ENCODE measurements at regions of chr9 and their contacts with region 1.

Region 1: DNA sequence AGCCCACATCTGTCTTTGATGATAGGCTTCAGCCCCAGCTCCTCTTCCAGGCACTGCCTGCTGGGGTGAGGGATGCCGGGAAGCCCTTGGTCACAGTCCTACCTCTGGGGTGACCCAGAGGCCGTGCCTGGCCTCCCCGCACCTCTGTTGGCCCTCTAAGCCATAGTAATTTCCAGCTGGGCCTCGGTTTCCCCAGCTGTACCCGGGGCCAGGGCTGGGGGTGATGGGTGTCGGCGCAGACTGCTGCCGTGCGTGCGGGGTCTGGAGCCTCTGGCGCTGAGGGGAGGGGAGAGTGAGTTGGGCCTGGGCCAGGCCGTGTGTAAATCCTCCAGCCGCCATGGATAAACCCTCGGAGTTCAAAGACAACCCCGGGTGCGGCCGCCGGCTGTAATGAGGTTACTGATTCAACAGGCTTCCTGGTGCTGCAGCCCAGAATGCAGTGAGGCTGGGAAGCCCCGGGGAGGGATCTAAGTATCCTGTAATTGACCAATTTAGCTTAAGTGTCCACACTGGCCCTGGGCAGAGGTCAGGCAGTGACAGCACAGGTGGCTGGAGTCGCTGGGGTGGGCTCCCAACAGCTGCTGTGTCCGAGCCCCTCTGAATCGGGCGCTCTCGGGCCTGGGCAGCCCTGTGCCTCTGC is 7.1 kb downstream of the RXRA start:
- DNase-seq: no peak
- H3K4me3 ChIP-seq: no peak overlapping the region
- H3K27ac ChIP-seq: no peak overlapping the region
- H3K4me1 ChIP-seq: peaks cover 2 to 46% of the 10 kb centered on the region in 2 donors
- H3K27me3 ChIP-seq: no peaks in the 10 kb centered on the region
- CTCF ChIP-seq: no peak
- POLR2A ChIP-seq: no peak

Region 2: DNA sequence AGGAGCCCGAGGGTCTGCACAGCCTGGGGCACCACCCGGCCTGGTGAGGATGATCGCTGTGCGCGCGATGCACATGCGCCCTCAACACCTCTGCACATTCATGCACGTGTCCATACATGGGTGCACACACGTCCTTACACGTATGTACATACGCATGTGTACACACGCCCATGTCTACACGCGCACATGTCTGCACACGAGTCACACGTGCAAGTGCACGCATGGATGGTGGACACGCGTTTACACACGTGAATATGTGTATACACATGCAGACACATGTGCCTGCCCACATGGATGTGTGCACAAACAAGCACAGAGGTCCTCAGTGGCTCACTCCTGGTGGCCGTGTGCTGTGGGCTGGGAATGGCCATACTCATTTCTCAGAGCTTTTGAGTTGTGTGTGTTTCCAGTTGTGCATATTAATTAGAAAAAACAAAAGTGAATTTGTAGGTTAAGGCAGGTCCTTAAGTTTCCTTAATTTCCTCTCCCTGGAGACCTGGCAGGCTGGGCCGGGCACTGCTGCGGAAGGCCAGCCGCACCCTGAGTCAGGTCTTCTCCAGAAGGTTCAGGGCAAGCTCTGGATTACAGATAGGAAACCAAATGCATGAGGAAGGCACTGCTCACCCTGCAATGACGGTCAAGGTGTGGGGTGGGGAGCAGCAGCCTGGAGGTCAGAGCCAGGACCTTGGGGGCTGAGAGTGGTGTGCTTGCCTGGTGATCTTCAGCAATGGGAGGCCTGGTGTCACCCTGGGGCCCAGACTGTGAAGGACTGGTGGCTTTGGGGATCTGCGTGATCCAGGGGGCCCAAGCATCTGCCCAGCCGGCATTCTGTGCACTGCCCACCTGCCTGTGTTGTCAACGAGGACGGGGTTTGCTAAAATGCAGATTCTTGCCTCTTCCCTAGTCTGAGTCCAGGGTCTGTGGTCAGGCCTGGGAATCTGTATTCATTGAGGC is 167.7 kb before region 1 on chr9:
- intact Hi-C with region 1: loop called (anchors 5 kb)
- DNase-seq: peak in 1 of 2 donors; percentile 46
- H3K4me3 ChIP-seq: no peak overlapping the region
- H3K27ac ChIP-seq: no peak overlapping the region
- H3K4me1 ChIP-seq: no peaks in the 10 kb centered on the region
- H3K27me3 ChIP-seq: no peaks in the 10 kb centered on the region
- CTCF ChIP-seq: no peak
- POLR2A ChIP-seq: no peak

Region 3: DNA sequence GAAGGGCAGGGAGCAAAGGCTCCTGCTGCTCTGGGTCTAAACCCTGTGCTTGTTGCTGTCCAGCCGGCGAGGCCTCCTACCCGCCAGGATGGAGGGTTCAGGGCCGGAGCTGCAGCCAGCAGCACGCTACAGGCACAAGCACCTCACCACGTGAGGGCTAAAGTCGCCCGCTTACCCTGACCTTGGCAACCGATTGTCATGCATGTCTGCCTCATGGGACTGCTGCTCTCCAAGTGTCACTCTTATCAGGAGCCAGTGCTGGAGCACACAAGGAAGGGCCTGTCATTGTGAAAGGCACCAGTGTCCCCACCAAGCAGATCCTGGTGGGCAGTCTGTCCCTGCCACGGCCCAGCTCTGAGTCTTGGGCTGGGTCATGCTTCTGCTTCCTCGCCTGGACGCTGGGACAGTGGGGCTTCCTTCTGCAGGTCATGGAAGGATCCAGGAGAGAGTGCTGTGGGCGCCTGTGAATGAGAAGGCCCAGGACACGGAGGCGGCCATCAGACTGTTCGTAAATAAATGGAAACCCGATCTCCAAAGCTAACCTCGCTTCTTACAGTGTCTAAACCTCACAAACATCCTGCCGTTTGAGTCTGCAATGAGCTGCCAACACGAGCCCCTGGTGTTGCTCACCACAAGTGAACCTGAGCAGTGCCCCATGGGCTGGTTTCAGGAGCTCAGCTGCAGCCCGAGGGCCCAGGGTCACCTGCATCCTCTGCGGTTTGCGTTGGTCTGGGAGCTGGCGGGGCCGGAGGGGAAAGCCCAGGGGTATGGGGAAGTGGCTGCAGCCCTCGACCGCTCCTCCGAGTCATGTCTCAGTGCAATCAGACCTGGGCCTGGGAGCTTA is 65.3 kb before region 1 on chr9:
- intact Hi-C with region 1: no loop called
- DNase-seq: no peak
- H3K4me3 ChIP-seq: no peak overlapping the region
- H3K27ac ChIP-seq: no peak overlapping the region
- H3K4me1 ChIP-seq: no peaks in the 10 kb centered on the region
- H3K27me3 ChIP-seq: no peaks in the 10 kb centered on the region
- CTCF ChIP-seq: no peak
- POLR2A ChIP-seq: no peak

Region 4: DNA sequence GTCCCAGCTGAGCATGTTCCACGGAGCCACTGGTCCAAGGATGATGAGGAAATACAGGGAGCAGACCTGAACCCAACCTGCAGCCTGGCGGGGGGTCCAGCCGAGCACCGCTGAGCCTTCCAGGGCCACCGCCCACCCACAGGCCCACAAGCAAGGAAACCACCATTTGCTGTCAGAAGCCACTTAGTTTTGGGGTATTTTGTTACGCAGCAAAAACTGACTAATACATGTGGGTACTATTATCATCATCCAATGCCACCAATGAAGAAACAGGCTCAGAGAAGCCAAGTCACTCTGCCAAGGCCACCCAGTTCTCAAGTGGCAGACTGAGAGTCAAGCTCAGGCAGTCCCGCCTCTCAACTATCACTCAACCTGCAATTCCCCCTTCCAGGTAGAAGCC is 55.1 kb before region 1 on chr9:
- intact Hi-C with region 1: no loop called
- DNase-seq: no peak
- H3K4me3 ChIP-seq: no peak overlapping the region
- H3K27ac ChIP-seq: no peak overlapping the region
- H3K4me1 ChIP-seq: peaks cover 0 to 4% of the 10 kb centered on the region in 2 donors
- H3K27me3 ChIP-seq: no peaks in the 10 kb centered on the region
- CTCF ChIP-seq: no peak
- POLR2A ChIP-seq: no peak

Region 5: DNA sequence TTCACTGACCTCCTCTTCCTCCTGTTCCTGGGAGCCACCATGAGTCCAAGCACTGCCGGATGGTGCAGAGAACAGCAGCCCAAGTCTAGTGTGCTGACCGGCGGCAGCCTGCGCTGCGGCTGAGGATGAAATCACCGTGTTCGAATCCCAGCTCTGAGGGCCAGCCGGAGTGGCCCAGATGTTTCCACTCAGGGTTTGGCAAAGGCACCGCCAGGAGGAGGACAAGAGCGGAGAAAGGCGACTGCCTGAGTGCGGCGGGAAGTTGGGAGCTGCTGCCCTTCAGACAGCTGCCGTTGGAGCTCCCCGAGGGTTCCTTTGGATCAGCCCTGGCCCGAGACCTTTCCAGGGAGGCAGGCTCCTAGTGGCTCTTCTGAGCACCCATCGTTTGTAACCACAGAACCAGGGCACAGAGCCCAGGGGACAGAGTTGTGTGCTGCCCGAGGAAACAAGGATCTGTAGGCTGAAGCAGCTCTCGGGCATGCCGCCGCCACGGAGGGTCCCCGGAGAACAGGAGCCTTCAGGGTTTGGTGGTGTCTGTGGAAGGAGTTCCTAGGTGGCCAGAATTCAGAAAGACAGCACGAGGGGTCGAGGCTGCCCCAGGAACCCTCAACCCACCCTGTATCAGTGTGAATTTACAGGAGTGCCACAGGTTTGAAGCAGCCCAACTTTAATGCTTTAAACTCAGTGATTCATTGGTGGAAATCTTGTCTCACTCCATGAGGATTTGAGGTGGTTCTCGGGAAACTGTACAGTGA is 192.7 kb after region 1 on chr9:
- intact Hi-C with region 1: no loop called
- DNase-seq: peak; percentile 32 to 64
- H3K4me3 ChIP-seq: no peak overlapping the region
- H3K27ac ChIP-seq: peak overlapping the region; percentile 57 to 61
- H3K4me1 ChIP-seq: peaks cover 0 to 3% of the 10 kb centered on the region in 2 donors
- H3K27me3 ChIP-seq: no peaks in the 10 kb centered on the region
- CTCF ChIP-seq: no peak
- POLR2A ChIP-seq: no peak